ENCODE measurements at regions of chr4 and their contacts with region 1.

Region 1: GRCh38 chr4:127586922-127587571 is 45.7 kb upstream of the INTU start:
- DNase-seq: peak; percentile 41
- ATAC-seq: peak; percentile 100
- H3K4me3 Mint-ChIP-seq: no peak overlapping the region
- H3K27ac Mint-ChIP-seq: no peak overlapping the region; the same call in 1 of the 2 replicates
- H3K4me1 Mint-ChIP-seq: peaks cover 12% of the 10 kb centered on the region
- H3K27me3 Mint-ChIP-seq: no peaks in the 10 kb centered on the region
- CTCF ChIP-seq: peak; percentile 73

Region 2: DNA sequence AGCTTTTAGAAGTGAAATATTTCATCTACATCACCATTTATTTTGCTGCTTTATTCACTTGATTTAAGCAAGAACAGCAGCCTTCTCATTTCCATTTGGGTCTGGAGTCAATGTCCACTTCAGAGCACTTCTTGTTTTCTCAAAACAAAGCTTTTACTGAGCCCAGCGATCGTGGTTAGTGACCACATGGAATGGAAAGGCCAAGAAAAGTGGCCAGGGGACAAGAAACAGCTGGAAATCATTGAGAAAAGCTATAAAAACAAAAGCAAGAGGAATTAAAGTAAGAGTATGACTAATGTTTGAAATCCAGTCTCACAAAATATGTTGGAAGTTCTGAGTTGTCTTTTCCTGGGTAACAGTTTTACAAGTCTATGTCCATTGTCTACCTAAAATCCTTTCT is 282.7 kb before region 1 on chr4:
- CTCF ChIA-PET with region 1: no interaction called
- POLR2A ChIA-PET with region 1: no interaction called
- DNase-seq: no peak
- ATAC-seq: no peak
- H3K4me3 Mint-ChIP-seq: no peak overlapping the region
- H3K27ac Mint-ChIP-seq: no peak overlapping the region
- H3K4me1 Mint-ChIP-seq: peaks cover 1% of the 10 kb centered on the region
- H3K27me3 Mint-ChIP-seq: no peaks in the 10 kb centered on the region
- CTCF ChIP-seq: no peak

Region 3: GRCh38 chr4:127509155-127509554 is 77.9 kb before region 1 on chr4:
- CTCF ChIA-PET with region 1: no interaction called
- POLR2A ChIA-PET with region 1: no interaction called
- DNase-seq: no peak
- ATAC-seq: no peak
- H3K4me3 Mint-ChIP-seq: no peak overlapping the region
- H3K27ac Mint-ChIP-seq: peak overlapping the region; percentile 59
- H3K4me1 Mint-ChIP-seq: peaks cover 19% of the 10 kb centered on the region
- H3K27me3 Mint-ChIP-seq: no peaks in the 10 kb centered on the region
- CTCF ChIP-seq: no peak

Region 4: DNA sequence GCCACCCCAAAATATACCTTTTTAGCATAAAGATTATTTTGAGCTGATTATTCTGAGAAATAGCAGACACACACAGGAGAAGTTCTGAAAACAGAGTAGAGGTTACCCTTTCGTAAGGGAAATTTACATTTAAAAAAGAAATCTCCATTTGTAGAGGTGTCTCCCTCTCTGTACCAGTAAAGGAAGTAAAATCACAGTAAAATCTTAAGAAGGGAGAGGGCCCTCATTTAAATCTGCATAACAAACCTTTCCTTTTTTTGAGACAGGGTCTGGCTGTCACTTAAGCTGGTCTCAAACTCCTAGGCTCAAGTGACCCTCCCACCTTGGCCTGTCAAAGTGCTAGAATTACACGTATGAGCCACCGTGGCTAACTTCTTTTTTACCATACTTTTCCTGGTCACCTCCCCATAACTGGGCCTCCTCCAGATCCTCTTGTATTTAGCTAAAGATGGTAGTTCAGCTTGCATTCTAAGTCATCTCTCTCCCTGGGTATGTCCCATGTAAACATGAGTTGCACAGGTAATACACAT is 46.5 kb before region 1 on chr4:
- CTCF ChIA-PET with region 1: interaction called, 16 read pairs
- POLR2A ChIA-PET with region 1: no interaction called
- DNase-seq: no peak
- ATAC-seq: peak; percentile 78
- H3K4me3 Mint-ChIP-seq: peak overlapping the region; percentile 11; the same call in 1 of the 2 replicates
- H3K27ac Mint-ChIP-seq: peak overlapping the region; percentile 8
- H3K4me1 Mint-ChIP-seq: peaks cover 32% of the 10 kb centered on the region
- H3K27me3 Mint-ChIP-seq: no peaks in the 10 kb centered on the region
- CTCF ChIP-seq: no peak

Region 5: DNA sequence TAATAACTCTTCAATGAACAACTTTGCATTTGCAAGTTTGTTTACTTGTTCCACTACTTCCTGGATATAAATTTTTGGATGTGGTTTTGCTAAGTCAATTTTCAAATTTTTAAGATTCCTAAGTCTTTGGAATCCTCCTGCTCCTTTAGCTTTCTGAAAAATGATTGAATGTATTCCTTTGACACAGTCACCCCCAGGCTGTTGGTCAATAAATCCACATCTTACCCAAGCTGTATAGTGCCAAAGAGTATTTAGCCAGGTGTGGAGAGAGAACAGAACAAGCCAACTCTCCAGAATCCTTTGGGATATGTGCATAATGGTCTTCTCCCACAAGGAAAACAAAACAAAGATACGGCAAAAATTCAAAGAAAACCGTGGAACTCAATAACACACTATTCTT is 11.2 kb before region 1 on chr4:
- CTCF ChIA-PET with region 1: interaction called, 12 read pairs
- POLR2A ChIA-PET with region 1: no interaction called
- DNase-seq: no peak
- ATAC-seq: no peak
- H3K4me3 Mint-ChIP-seq: no peak overlapping the region
- H3K27ac Mint-ChIP-seq: no peak overlapping the region
- H3K4me1 Mint-ChIP-seq: peaks cover 18% of the 10 kb centered on the region
- H3K27me3 Mint-ChIP-seq: no peaks in the 10 kb centered on the region
- CTCF ChIP-seq: no peak

Region 6: DNA sequence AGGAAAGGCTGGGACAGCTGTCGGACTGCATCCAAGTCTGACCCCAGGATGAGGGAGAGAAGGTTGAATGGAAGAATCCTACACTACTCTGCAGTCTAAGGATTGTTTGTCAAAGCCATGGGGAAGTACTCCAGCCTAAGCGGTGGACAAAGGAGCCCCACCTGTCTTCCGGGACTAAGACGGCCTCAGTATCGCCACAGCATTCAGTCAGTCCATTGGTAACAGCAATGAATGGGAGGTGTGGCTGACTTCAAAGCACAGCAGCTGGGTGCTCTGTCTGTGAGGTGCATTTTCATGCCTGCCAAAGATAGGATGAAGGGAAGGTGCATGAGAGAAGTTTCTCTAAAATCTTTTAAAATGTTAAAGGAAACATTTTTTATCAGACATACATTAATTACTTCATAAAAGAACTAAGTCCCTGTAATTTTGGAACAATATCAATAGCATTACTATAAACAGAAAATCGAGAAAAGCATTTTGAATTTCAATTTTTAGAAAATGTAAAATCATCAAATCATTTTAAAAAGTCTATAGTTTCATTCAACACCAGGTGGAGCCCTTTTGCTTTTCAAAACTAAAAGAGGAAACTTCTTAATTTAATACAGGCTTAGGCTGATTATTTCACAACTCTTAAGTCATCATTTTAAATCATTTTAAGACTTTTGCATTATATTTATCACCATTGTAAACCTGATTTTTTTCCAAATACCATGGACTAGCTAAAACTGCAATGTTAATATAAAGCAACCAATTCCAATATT is 18.1 kb after region 1 on chr4:
- CTCF ChIA-PET with region 1: interaction called, 27 read pairs
- POLR2A ChIA-PET with region 1: no interaction called
- DNase-seq: peak; percentile 69
- ATAC-seq: peak; percentile 99
- H3K4me3 Mint-ChIP-seq: peak overlapping the region; percentile 53
- H3K27ac Mint-ChIP-seq: peak overlapping the region; percentile 96
- H3K4me1 Mint-ChIP-seq: peaks cover 38% of the 10 kb centered on the region
- H3K27me3 Mint-ChIP-seq: no peaks in the 10 kb centered on the region
- CTCF ChIP-seq: no peak

Region 7: GRCh38 chr4:127732613-127733328 is 145.7 kb after region 1 on chr4:
- CTCF ChIA-PET with region 1: interaction called, 20 read pairs
- POLR2A ChIA-PET with region 1: no interaction called
- DNase-seq: no peak
- ATAC-seq: peak; percentile 92
- H3K4me3 Mint-ChIP-seq: no peak overlapping the region
- H3K27ac Mint-ChIP-seq: no peak overlapping the region
- H3K4me1 Mint-ChIP-seq: peaks cover 3% of the 10 kb centered on the region; the same call in 1 of the 2 replicates
- H3K27me3 Mint-ChIP-seq: no peaks in the 10 kb centered on the region
- CTCF ChIP-seq: peak; percentile 21; the same call in 1 of the 2 replicates

Measured in WTC11 (cell line).